ENCODE measurements at regions of chr7 and their contacts with region 1.

Region 1: DNA sequence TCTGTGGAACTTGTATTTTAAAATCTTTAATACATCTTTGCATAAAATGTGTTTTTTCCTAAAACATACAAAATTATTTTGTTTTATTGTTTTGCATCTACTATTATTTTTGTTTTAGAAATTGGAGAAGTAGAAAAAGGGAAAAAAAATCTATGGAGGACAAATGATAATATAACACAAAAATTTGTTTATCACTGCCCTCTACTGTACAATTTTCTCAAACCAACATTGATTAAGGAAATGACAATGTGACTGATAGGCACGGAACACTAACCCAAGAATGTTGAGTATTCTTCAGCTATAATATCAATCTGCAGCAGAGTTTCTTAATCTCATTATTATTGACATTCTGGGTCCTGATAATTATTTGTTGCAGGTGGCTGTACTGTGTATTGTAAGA is 9.5 kb upstream of the ING3 start:
- DNase-seq: no peak
- H3K4me3 ChIP-seq: no peak overlapping the region
- H3K27ac ChIP-seq: no peak overlapping the region
- H3K4me1 ChIP-seq: no peaks in the 10 kb centered on the region
- H3K27me3 ChIP-seq: no peaks in the 10 kb centered on the region
- CTCF ChIP-seq: peak; percentile 58

Region 2: DNA sequence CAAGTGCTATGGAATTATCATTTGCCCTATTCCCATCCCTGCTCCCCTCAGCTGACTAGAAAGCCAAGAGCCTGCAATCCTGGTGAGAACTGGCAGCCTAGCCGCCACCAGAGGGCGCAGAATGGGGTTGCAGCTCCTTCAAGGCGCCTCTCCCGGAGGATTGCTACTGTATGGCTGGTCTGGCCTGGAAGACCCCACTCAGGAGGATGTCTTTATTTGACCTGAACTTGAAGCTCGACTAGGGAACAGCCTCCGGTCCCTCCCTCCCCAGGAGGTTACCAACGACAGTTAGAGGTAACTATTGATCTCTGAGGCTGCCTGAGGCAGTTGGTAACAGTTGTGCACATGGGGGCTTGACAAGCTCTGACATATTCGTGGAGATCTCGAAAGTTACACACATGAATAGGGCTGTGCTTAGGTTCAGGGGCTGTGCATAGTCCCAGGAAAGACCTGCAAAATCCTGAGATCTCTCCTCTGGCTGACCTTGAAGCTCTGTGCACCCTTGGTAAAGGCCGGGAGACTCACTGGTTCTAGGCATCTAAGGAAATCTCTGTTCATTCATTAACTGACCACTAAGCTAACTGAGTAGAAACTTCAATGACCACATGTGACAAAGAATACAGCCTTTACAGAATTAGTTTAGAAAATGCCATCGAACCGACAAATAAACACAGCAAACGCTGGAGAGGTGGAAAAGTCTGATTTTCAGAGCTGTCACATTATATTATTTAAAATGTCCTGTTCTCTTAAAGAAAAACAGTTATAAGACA is 148.8 kb before region 1 on chr7:
- intact Hi-C with region 1: loop called (anchors 5 kb)
- DNase-seq: peak; percentile 74
- H3K4me3 ChIP-seq: no peak overlapping the region
- H3K27ac ChIP-seq: no peak overlapping the region
- H3K4me1 ChIP-seq: peaks cover 55% of the 10 kb centered on the region
- H3K27me3 ChIP-seq: no peaks in the 10 kb centered on the region
- CTCF ChIP-seq: peak; percentile 88

Region 3: GRCh38 chr7:120805636-120806388 is 135.3 kb before region 1 on chr7:
- intact Hi-C with region 1: loop called (anchors 5 kb)
- DNase-seq: no peak
- H3K4me3 ChIP-seq: no peak overlapping the region
- H3K27ac ChIP-seq: no peak overlapping the region
- H3K4me1 ChIP-seq: peaks cover 50% of the 10 kb centered on the region
- H3K27me3 ChIP-seq: no peaks in the 10 kb centered on the region
- CTCF ChIP-seq: peak; percentile 89

Region 4: GRCh38 chr7:121235201-121235600 is 294.1 kb after region 1 on chr7:
- intact Hi-C with region 1: no loop called
- DNase-seq: no peak
- H3K4me3 ChIP-seq: no peak overlapping the region
- H3K27ac ChIP-seq: no peak overlapping the region
- H3K4me1 ChIP-seq: no peaks in the 10 kb centered on the region
- H3K27me3 ChIP-seq: no peaks in the 10 kb centered on the region
- CTCF ChIP-seq: no peak

Region 5: GRCh38 chr7:121262221-121262620 is 321.2 kb after region 1 on chr7:
- intact Hi-C with region 1: no loop called
- DNase-seq: no peak
- H3K4me3 ChIP-seq: no peak overlapping the region
- H3K27ac ChIP-seq: no peak overlapping the region
- H3K4me1 ChIP-seq: no peaks in the 10 kb centered on the region
- H3K27me3 ChIP-seq: no peaks in the 10 kb centered on the region
- CTCF ChIP-seq: no peak